Activated CD8-positive, alpha-beta memory T cell treated with anti-CD3 and anti-CD28 coated beads, Interleukin-2, amount 10 ng/mL, durations not matched to agents 7 days and 5 days (primary cell): ENCODE measurements at regions of chr16 and their contacts with region 1.

Region 1: GRCh38 chr16:22055878-22056277 is 36.5 kb upstream of the VWA3A start:
- DNase-seq: no peak
- ATAC-seq: peak; percentile 29
- H3K4me3 Mint-ChIP-seq: no peak overlapping the region
- H3K27ac Mint-ChIP-seq: peak overlapping the region; percentile 70
- H3K4me1 Mint-ChIP-seq: peaks cover 31% of the 10 kb centered on the region
- H3K27me3 Mint-ChIP-seq: no peaks in the 10 kb centered on the region

Region 2: DNA sequence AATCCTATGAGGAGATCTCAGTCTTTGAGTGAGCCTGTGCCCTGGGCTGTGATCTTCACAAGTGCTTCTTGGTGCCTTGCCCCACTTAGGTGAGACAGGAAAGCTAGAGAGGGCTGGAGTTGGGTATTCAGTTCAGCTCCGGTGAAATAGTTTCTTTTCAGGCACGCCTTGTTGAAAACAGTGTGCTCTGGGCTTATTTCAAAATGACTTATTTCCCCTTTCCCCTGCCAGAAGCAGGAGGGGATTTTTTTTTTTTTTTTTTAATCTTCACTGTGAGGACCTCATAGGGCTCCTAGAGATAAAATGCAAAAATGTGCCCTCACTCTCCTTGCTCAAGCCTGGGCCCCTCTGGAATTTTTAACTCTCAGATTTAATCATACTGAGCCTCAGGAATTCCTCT is 20.7 kb before region 1 on chr16:
- CTCF ChIA-PET with region 1: interaction called, 10 read pairs
- DNase-seq: no peak
- ATAC-seq: no peak
- H3K4me3 Mint-ChIP-seq: no peak overlapping the region
- H3K27ac Mint-ChIP-seq: no peak overlapping the region
- H3K4me1 Mint-ChIP-seq: peaks cover 37% of the 10 kb centered on the region
- H3K27me3 Mint-ChIP-seq: no peaks in the 10 kb centered on the region

Region 3: GRCh38 chr16:22141746-22142145 is 85.9 kb after region 1 on chr16:
- CTCF ChIA-PET with region 1: no interaction called
- DNase-seq: no peak
- ATAC-seq: no peak
- H3K4me3 Mint-ChIP-seq: no peak overlapping the region
- H3K27ac Mint-ChIP-seq: no peak overlapping the region
- H3K4me1 Mint-ChIP-seq: no peaks in the 10 kb centered on the region
- H3K27me3 Mint-ChIP-seq: peaks cover 6% of the 10 kb centered on the region